IMR-90 (cell line): ENCODE measurements at regions of chr14 and their contacts with region 1.

Region 1: GRCh38 chr14:79584679-79585078 is 626.6 kb downstream of the DIO2 start:
- DNase-seq: peak; percentile 98
- ATAC-seq: peak; percentile 79
- H3K4me3 ChIP-seq: no peak overlapping the region
- H3K27ac ChIP-seq: peak overlapping the region; percentile 85
- H3K4me1 ChIP-seq: peaks cover 14% of the 10 kb centered on the region
- H3K27me3 ChIP-seq: no peaks in the 10 kb centered on the region
- CTCF ChIP-seq: peak; percentile 53
- POLR2A ChIP-seq: no peak
- RAD21 ChIP-seq: peak; percentile 59

Region 2: GRCh38 chr14:77825895-77826519 is 1758.7 kb before region 1 on chr14:
- CTCF ChIA-PET with region 1: no interaction called
- POLR2A ChIA-PET with region 1: interaction called, 10 read pairs
- dilution Hi-C with region 1: no loop called
- in situ Hi-C with region 1: no loop called
- intact Hi-C with region 1: no loop called
- DNase-seq: no peak
- ATAC-seq: no peak
- H3K4me3 ChIP-seq: no peak overlapping the region
- H3K27ac ChIP-seq: no peak overlapping the region
- H3K4me1 ChIP-seq: no peaks in the 10 kb centered on the region
- H3K27me3 ChIP-seq: no peaks in the 10 kb centered on the region
- CTCF ChIP-seq: no peak
- POLR2A ChIP-seq: no peak
- RAD21 ChIP-seq: no peak

Region 3: DNA sequence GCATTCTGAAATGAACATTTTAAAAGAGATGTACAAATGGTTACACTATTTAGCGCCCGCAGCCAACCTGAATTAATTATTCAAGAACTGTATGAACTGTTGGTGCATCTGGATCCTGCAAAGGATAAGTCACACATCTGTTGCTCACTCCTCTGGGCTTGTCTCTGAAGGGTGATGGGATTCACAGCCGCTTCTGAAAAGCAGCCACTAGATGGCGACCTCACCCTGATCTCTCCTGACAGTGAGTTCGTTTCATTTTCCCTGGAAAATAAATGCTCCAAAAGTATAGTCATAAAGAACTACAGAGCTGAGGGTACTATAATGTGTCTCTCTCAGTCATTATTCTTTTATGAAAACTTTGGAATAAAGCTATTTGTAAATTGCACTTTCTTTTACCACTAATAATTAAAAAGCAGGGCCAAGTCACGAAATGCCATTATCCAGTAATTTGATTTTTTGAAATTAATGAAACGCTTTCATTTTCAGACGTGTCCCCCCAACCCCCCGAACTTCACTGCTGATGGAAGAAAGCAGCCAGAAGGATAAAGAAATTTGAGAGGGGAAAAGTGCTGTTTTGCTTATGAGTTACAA is 624.9 kb before region 1 on chr14:
- CTCF ChIA-PET with region 1: no interaction called
- POLR2A ChIA-PET with region 1: no interaction called
- dilution Hi-C with region 1: no loop called
- in situ Hi-C with region 1: no loop called
- intact Hi-C with region 1: loop called (anchors 5 kb)
- DNase-seq: peak; percentile 82
- ATAC-seq: peak; percentile 97
- H3K4me3 ChIP-seq: no peak overlapping the region
- H3K27ac ChIP-seq: no peak overlapping the region
- H3K4me1 ChIP-seq: no peaks in the 10 kb centered on the region
- H3K27me3 ChIP-seq: no peaks in the 10 kb centered on the region
- CTCF ChIP-seq: peak; percentile 87
- POLR2A ChIP-seq: no peak
- RAD21 ChIP-seq: peak; percentile 86

Region 4: DNA sequence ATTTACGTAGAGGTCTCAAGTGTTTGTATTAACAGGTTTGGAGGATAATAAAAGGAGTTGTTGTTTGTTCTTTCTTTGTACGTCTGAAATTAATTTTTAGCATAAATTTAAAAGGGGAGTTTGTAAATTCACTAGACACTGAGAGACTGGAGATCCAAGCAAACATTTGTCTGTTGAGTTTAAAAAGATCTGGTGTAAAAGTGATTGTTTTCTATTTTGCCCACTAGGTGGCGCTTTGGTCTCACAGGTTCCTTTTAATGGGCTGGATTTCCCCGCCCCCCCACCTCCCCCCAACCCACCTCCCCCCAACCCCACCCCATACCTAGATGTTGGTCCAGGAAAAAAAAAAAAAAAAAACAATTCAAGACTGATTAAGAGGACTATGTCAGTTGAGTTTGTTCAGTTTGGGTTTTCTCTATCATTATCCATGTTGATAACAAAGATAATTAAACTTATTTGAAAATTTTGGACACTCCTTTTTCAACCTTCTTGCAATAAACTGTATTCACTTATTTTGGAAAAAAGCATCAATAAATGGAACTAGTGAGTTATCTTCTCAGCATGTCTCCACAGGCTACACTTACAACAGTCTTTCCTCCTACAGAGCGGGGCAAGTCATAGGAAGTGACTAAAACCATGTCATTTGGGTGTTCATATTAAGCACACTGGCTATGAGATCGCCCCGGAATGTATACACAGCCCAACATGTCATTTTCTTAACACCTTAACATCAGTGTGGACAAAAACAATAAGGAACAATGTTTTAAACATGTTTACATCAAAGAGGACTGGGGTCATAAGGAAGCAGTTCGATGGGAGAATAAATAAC is 573.4 kb before region 1 on chr14:
- CTCF ChIA-PET with region 1: no interaction called
- POLR2A ChIA-PET with region 1: no interaction called
- dilution Hi-C with region 1: no loop called
- in situ Hi-C with region 1: no loop called
- intact Hi-C with region 1: loop called (anchors 5 kb)
- DNase-seq: peak; percentile 84
- ATAC-seq: peak; percentile 86
- H3K4me3 ChIP-seq: no peak overlapping the region
- H3K27ac ChIP-seq: no peak overlapping the region
- H3K4me1 ChIP-seq: no peaks in the 10 kb centered on the region; the same call in 1 of the 2 replicates
- H3K27me3 ChIP-seq: no peaks in the 10 kb centered on the region
- CTCF ChIP-seq: peak; percentile 56
- POLR2A ChIP-seq: no peak
- RAD21 ChIP-seq: peak; percentile 63

Region 5: GRCh38 chr14:79369359-79370332 is 215.0 kb before region 1 on chr14:
- CTCF ChIA-PET with region 1: no interaction called
- POLR2A ChIA-PET with region 1: no interaction called
- dilution Hi-C with region 1: no loop called
- in situ Hi-C with region 1: no loop called
- intact Hi-C with region 1: loop called (anchors 2 kb)
- DNase-seq: peak; percentile 99
- ATAC-seq: peak; percentile 99
- H3K4me3 ChIP-seq: no peak overlapping the region
- H3K27ac ChIP-seq: no peak overlapping the region
- H3K4me1 ChIP-seq: peaks cover 2% of the 10 kb centered on the region; the same call in 1 of the 2 replicates
- H3K27me3 ChIP-seq: no peaks in the 10 kb centered on the region
- CTCF ChIP-seq: peak; percentile 34
- POLR2A ChIP-seq: no peak
- RAD21 ChIP-seq: no peak; the same call in 1 of the 2 replicates